ENCODE measurements at regions of chr14 and their contacts with region 1.

Region 1: GRCh38 chr14:51239813-51240803 is at the start of gene TMX1:
- DNase-seq: peak; percentile 78 to 91 (median 84)
- ATAC-seq: peak; percentile 95 to 97
- H3K4me3 Mint-ChIP-seq: peak within 1 kb of the TSS in 1 of 10 donors; percentile 77
- H3K27ac Mint-ChIP-seq: peak within 1 kb of the TSS in 1 of 10 donors; percentile 58
- H3K4me1 Mint-ChIP-seq: peaks cover 6 to 19% (median 11%) of the 10 kb centered on the region in 4 donors
- H3K27me3 Mint-ChIP-seq: no peaks in the 10 kb centered on the region
- polyA plus RNA-seq, gene TMX1: 28.1 to 41.8 (median 28.9) TPM

Region 2: DNA sequence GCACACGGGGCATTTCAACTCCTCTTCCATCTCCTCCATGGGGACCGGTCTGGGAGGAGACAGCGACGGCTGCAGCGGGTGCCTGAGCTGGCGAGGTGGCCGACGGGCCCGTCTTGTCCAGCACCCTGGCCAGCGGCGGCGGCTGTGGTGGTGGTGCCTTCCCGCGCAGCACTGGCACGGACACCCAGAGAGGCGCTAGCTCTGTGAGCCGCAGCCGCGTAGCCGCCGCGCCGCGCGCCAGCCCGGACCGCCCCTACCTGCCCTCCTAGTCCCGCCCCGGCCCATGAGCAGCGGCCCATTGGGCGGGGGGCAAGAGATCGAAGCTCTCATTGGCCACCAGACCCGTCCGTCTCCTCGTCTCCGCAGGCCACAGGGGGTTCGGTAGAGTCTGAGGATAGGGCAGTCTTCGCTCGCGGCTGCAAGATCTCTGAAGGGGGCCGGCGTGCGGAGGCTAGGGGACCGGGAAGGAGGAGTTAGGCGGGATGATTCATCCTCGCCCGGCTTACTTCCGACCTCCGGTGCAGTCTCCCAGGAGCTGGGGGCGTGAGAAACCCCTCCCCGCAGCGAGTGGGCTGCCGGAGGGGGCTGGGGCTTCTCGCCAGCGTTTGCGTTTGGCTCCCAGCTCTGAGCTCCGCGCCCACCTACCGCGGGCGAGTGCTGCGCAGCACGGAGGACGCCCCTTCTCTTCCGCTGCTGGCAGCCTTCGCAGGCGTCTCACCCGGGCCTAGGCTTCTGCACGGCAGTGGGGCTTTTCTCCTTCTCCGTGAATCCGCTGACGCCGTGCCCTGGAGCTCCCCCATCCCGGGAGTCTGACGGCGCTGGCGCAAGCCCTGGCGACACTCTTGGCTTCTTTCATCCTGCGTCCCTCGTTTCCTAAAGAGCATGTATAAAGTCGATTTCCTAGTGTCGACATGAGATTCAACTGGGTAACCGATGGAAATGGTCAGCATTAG is 144.9 kb before region 1 on chr14 and contains the start of gene TRIM9:
- POLR2A ChIA-PET with region 1: interaction called, 21 read pairs
- DNase-seq: peak; percentile 86 to 97 (median 93)
- ATAC-seq: peak; percentile 91 to 93
- H3K4me3 Mint-ChIP-seq: peak within 1 kb of the TSS; percentile 87 to 97 (median 92)
- H3K27ac Mint-ChIP-seq: peak within 1 kb of the TSS; percentile 63 to 94 (median 92)
- H3K4me1 Mint-ChIP-seq: peaks cover 5 to 30% (median 13%) of the 10 kb centered on the region in 4 donors
- H3K27me3 Mint-ChIP-seq: peaks cover 0 to 23% (median 4%) of the 10 kb centered on the region in 5 donors
- polyA plus RNA-seq, gene TRIM9: 0.10 to 0.43 TPM in 2 of 3 donors, not detected in the other

Region 3: GRCh38 chr14:51269634-51270033 is 29.5 kb after region 1 on chr14:
- POLR2A ChIA-PET with region 1: no interaction called
- DNase-seq: no peak
- ATAC-seq: no peak
- H3K4me3 Mint-ChIP-seq: no peak overlapping the region
- H3K27ac Mint-ChIP-seq: peak overlapping the region in 1 of 10 donors; percentile 1
- H3K4me1 Mint-ChIP-seq: no peaks in the 10 kb centered on the region
- H3K27me3 Mint-ChIP-seq: no peaks in the 10 kb centered on the region